PC-3 (cell line): ENCODE measurements at regions of chr17 and their contacts with region 1.

Region 1: GRCh38 chr17:40909351-40909750 is 24.3 kb upstream of the KRT20 start:
- DNase-seq: peak; percentile 97
- ATAC-seq: peak; percentile 78
- H3K4me3 ChIP-seq: peak overlapping the region; percentile 39; the same call in 1 of the 2 replicates
- H3K27ac ChIP-seq: peak overlapping the region; percentile 98
- H3K4me1 ChIP-seq: peaks cover 67% of the 10 kb centered on the region
- H3K27me3 ChIP-seq: no peaks in the 10 kb centered on the region
- CTCF ChIP-seq: peak; percentile 84

Region 2: DNA sequence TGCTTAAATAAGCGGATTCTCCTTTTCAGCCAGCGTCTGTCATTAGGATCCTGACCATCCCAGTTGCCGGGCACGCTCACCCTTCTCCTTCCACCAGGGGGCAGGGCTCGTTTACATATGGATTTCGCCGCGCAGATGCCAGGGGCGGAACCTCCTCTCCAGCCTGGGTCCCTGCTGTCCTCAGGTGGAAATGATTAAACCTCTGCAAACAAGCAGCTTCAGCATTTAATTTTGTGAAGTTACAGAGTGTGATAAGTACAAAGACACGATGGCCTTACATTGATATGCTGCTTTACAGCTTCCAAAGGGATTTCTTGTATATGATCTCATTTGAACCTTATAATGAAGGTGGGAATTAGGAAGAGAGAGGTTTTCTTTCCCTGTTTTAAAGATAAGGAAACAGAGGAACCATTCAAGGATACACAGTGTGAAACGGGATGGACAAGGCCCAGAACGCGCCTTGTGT is 105.7 kb before region 1 on chr17:
- CTCF ChIA-PET with region 1: interaction called, 3 read pairs
- POLR2A ChIA-PET with region 1: no interaction called
- intact Hi-C with region 1: loop called (anchors 5 kb)
- DNase-seq: peak; percentile 82
- ATAC-seq: peak; percentile 85
- H3K4me3 ChIP-seq: no peak overlapping the region
- H3K27ac ChIP-seq: peak overlapping the region; percentile 31; the same call in 1 of the 2 replicates
- H3K4me1 ChIP-seq: peaks cover 8% of the 10 kb centered on the region
- H3K27me3 ChIP-seq: no peaks in the 10 kb centered on the region
- CTCF ChIP-seq: peak; percentile 86

Region 3: DNA sequence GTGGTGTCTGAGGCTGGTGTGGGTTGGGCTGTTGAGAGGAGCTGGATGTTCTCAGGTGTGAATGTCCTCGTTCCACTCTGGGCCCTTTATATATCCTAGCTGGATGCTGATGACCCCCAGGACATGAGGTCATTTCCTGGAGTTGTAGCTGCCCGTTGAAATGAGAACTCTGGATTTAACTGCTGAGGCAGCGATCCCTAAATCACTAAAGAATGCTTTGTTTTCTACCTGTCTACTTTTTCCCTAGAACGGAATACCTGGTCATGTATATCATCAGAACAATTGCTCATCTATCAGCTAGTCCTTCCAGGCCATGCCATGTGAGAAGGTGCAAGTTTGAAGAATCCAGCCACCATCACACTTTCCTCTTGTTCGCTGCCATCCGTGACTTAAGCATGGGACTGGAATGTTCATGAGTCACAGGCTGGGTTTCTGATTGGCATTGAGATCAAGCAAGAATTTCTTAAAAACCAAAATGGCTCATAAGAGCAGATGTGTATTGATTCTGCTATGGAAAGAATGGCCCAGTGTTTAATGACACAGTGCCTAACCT is 150.8 kb after region 1 on chr17 and contains the start of gene KRTAP2-3:
- CTCF ChIA-PET with region 1: no interaction called
- POLR2A ChIA-PET with region 1: no interaction called
- intact Hi-C with region 1: loop called (anchors 2 kb)
- DNase-seq: peak; percentile 86
- ATAC-seq: peak; percentile 48
- H3K4me3 ChIP-seq: no peak within 1 kb of the TSS
- H3K27ac ChIP-seq: peak within 1 kb of the TSS; percentile 94
- H3K4me1 ChIP-seq: peaks cover 67% of the 10 kb centered on the region
- H3K27me3 ChIP-seq: no peaks in the 10 kb centered on the region
- CTCF ChIP-seq: no peak
- total RNA-seq, gene KRTAP2-3: 10.8 and 12.4 TPM in 2 replicates

Region 4: DNA sequence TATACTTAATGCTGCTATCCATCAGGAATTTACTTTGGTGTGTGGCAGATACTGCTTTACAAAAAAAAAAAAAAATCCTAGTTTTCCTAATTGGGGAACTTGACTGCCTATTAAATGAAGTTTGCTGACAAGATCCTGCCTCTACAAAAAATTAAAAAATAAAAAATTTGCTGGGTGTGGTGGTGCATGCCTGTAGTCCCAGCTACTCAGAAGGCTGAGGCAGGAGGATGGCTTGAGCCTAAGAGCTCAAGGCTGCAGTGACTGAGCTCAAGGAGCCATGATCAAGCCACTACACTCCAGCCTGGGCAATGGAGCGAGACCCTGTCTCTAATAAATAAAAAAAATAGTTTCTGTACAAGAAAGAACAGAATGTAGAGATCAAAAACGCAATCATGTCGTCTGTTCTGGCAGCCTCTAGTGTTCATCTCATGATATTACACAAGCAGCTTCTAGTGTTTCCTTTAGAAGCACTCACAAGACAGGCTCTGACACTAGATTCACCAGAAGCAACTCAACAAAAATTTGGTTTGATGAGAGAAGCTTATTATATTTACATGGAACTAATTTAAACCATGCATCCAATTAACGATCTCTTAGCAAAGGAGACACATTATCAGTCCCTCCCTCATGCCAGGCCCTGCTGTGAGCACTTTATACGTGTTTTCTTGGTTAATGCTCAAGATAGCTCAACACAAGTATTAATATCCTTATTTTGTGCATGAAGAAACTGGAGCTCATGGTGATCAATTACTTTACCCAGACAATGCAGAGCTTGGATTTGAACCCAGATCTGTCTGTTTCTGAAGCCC is 412.9 kb after region 1 on chr17:
- CTCF ChIA-PET with region 1: interaction called, 3 read pairs
- POLR2A ChIA-PET with region 1: no interaction called
- intact Hi-C with region 1: loop called (anchors 1 kb)
- DNase-seq: peak; percentile 65
- ATAC-seq: peak; percentile 68; the same call in 1 of the 2 replicates
- H3K4me3 ChIP-seq: no peak overlapping the region
- H3K27ac ChIP-seq: no peak overlapping the region
- H3K4me1 ChIP-seq: no peaks in the 10 kb centered on the region
- H3K27me3 ChIP-seq: no peaks in the 10 kb centered on the region
- CTCF ChIP-seq: peak; percentile 69

Region 5: DNA sequence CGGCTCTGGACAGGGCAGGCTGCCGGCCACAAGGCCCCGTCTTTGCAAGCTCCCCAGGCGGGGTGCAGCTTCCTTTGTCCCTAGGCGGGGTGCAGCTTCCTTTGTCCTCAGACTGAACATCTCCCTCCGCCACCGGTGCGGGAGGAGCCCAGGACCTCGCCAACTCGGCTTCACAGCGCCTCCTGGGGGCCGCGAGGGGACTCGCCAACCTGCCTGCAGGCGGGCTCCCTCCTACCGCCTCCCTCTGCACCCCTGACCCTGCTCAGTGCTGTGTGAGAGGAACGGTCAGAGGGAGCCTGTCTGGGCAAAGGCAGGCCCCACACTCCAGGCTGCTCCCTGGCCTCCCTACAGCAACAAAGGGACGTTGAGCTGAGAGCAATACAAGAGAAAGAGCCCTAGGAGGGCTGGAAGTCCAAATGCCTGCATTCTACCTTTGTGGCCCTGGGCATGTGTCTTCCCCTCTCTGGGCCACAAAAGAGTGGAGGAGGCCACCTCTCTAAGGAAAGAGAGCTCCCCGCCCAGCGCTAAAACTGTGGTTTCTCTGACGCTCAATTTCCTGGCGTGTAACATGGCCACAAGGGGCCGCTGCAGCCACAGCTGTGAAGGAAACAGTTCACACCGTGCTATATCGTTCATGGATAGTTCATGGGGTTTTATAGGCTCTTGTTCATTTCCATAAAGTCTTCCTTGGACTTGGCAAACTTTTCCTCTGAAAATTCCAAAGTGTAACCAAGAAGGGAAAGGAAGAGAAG is 639.7 kb after region 1 on chr17:
- CTCF ChIA-PET with region 1: interaction called, 10 read pairs
- POLR2A ChIA-PET with region 1: interaction called, 9 read pairs
- intact Hi-C with region 1: loop called (anchors 1 kb)
- DNase-seq: peak; percentile 91
- ATAC-seq: peak; percentile 59
- H3K4me3 ChIP-seq: peak overlapping the region; percentile 50; the same call in 1 of the 2 replicates
- H3K27ac ChIP-seq: peak overlapping the region; percentile 98
- H3K4me1 ChIP-seq: peaks cover 50% of the 10 kb centered on the region
- H3K27me3 ChIP-seq: no peaks in the 10 kb centered on the region
- CTCF ChIP-seq: peak; percentile 81